Activated naive CD4-positive, alpha-beta T cell treated with anti-CD3 and anti-CD28 coated beads for 36 hours (primary cell): ENCODE measurements at regions of chr3 and their contacts with region 1.

Region 1: GRCh38 chr3:72447059-72447946 is 400.9 kb downstream of the SHQ1 start:
- DNase-seq: peak; percentile 88
- H3K4me3 Mint-ChIP-seq: peak overlapping the region; percentile 54
- H3K27ac Mint-ChIP-seq: no peak overlapping the region
- H3K4me1 Mint-ChIP-seq: peaks cover 37% of the 10 kb centered on the region
- H3K27me3 Mint-ChIP-seq: peaks cover 12% of the 10 kb centered on the region

Region 2: DNA sequence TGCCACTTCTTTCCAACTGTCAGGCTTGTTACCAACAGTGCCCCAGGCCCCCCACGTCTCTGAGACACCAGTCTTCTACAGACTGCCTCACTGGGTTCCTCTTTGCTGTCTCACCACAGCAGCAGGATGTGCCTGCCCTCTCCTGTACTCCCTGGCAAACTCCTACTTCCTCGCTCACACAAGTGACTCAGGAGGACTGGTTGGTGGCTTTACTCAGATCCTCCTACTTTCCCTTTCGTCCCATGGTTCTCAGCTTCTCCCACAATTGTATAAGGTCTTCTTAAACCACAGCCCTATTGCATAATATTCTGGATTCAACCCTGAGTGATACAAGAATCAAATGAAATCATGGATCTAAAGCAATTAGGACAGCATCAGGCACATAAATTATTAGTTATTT is 415.7 kb before region 1 on chr3:
- CTCF ChIA-PET with region 1: no interaction called
- intact Hi-C with region 1: no loop called
- DNase-seq: peak; percentile 23
- H3K4me3 Mint-ChIP-seq: no peak overlapping the region
- H3K27ac Mint-ChIP-seq: no peak overlapping the region
- H3K4me1 Mint-ChIP-seq: peaks cover 3% of the 10 kb centered on the region
- H3K27me3 Mint-ChIP-seq: peaks cover 8% of the 10 kb centered on the region

Region 3: DNA sequence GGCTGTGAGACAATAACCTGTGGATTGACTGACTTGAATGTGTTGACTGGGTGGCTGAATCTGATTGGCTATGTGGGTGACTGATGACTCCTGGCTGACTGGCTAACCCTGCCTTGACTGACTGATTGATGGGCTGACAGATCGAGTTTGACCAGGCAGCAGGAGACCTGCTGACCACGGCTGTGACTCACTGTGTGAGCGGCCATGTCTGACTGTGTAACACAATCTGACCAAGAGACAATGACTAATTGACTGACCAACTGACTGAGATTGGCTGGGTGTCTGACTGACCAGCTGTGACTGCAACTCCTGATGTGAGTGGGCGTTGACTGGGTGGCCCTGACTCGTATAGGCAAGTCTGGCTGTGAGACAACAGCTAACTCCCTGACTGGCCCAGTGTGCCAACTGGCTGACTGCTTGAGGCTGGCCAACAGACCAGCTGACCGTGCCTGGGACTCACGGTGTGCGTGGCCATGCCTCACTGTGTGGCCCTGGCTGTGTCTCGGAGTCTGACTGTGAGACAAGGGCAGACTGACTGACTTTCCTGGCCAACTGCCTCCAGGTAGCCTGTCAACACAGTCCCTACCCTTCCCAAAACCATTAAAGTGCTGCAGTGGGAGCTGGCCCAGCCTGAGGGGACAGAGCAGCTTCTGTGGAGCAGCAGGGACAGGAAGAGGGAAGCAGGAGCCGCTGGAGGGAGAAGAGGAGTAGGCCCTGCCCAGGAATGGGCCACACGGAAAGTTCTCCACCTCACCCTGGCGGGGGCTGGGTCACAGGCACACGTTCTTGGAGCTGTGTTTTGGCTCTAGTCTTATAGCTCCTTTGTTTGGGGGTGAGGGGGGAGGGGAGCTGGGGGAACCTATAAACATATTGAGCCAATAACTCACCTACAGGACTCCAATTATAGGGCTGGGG is 107.9 kb before region 1 on chr3:
- CTCF ChIA-PET with region 1: no interaction called
- intact Hi-C with region 1: loop called (anchors 1 kb)
- DNase-seq: no peak
- H3K4me3 Mint-ChIP-seq: no peak overlapping the region
- H3K27ac Mint-ChIP-seq: no peak overlapping the region
- H3K4me1 Mint-ChIP-seq: peaks cover 36% of the 10 kb centered on the region
- H3K27me3 Mint-ChIP-seq: no peaks in the 10 kb centered on the region

Region 4: GRCh38 chr3:72407766-72408165 is 39.5 kb before region 1 on chr3:
- CTCF ChIA-PET with region 1: no interaction called
- intact Hi-C with region 1: loop called (anchors 1 kb)
- DNase-seq: no peak
- H3K4me3 Mint-ChIP-seq: no peak overlapping the region
- H3K27ac Mint-ChIP-seq: no peak overlapping the region
- H3K4me1 Mint-ChIP-seq: peaks cover 85% of the 10 kb centered on the region
- H3K27me3 Mint-ChIP-seq: no peaks in the 10 kb centered on the region

Region 5: GRCh38 chr3:72657666-72658065 is 210.4 kb after region 1 on chr3:
- CTCF ChIA-PET with region 1: no interaction called
- intact Hi-C with region 1: loop called (anchors 1 kb)
- DNase-seq: peak; percentile 83
- H3K4me3 Mint-ChIP-seq: no peak overlapping the region
- H3K27ac Mint-ChIP-seq: no peak overlapping the region
- H3K4me1 Mint-ChIP-seq: peaks cover 23% of the 10 kb centered on the region
- H3K27me3 Mint-ChIP-seq: peaks cover 13% of the 10 kb centered on the region